ENCODE measurements at regions of chr2 and their contacts with region 1.

Region 1: GRCh38 chr2:74529357-74530238 is at the starts of genes AUP1 and HTRA2:
- DNase-seq: peak; percentile 98
- ATAC-seq: peak; percentile 90
- H3K4me3 ChIP-seq: peak within 1 kb of the TSS; percentile 84 to 100 (median 100)
- H3K27ac ChIP-seq: peak within 1 kb of the TSS; percentile 95
- H3K4me1 ChIP-seq: peaks cover 55% of the 10 kb centered on the region
- H3K27me3 ChIP-seq: no peaks in the 10 kb centered on the region; a peak in 1 of 5 replicates
- CTCF ChIP-seq: peak; percentile 33
- EP300 ChIP-seq: peak; percentile 58 to 73; a peak in 2 of 4 replicates
- POLR2A ChIP-seq: peak; percentile 82 to 89
- RAD21 ChIP-seq: peak; percentile 52
- total RNA-seq, gene AUP1: 67.0 and 174 TPM in 2 replicates
- total RNA-seq, gene HTRA2: 37.0 and 47.7 TPM in 2 replicates

Region 2: DNA sequence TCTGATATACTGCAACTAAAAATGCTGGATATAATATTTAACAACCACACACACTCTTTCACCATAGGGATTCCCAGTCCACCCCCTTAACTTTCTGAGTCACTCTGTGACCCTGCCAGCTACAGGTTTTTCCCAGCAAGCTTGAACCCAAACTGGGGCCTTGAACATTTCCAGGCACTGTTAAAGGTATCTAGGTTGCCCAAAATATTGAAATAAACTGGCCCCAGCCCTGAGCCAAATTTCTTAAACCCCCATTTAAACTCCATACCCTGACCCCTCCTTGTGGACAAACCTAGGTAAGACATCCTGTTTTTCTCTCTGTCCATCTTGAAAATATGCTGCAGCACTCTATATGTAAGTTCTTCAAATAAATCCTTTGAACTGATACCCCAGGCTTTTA is 129.8 kb before region 1 on chr2:
- CTCF ChIA-PET with region 1: no interaction called
- POLR2A ChIA-PET with region 1: no interaction called
- in situ Hi-C with region 1: no loop called
- intact Hi-C with region 1: no loop called
- DNase-seq: peak; percentile 41
- ATAC-seq: peak; percentile 70
- H3K4me3 ChIP-seq: no peak overlapping the region
- H3K27ac ChIP-seq: no peak overlapping the region
- H3K4me1 ChIP-seq: 0 out of 2 replicates have a peak, but pooled peaks cover 6% of the 10 kb centered on the region
- H3K27me3 ChIP-seq: no peaks in the 10 kb centered on the region
- CTCF ChIP-seq: peak; percentile 49
- EP300 ChIP-seq: no peak
- POLR2A ChIP-seq: no peak
- RAD21 ChIP-seq: no peak

Region 3: GRCh38 chr2:74458132-74458925 is 71.3 kb before region 1 on chr2 and contains the start of gene WBP1:
- CTCF ChIA-PET with region 1: interaction called, 5 read pairs
- POLR2A ChIA-PET with region 1: interaction called, 23 read pairs
- in situ Hi-C with region 1: no loop called
- intact Hi-C with region 1: loop called (anchors 2 kb)
- DNase-seq: peak; percentile 100
- ATAC-seq: peak; percentile 92
- H3K4me3 ChIP-seq: peak within 1 kb of the TSS; percentile 76 to 92 (median 88)
- H3K27ac ChIP-seq: peak within 1 kb of the TSS; percentile 89
- H3K4me1 ChIP-seq: peaks cover 41% of the 10 kb centered on the region
- H3K27me3 ChIP-seq: no peaks in the 10 kb centered on the region; a peak in 1 of 5 replicates
- CTCF ChIP-seq: no peak
- EP300 ChIP-seq: no peak; a peak in 1 of 4 replicates
- POLR2A ChIP-seq: peak in 1 of 2 experiments; percentile 62; a peak in 2 of 4 replicates
- RAD21 ChIP-seq: 0 out of 2 replicates have a peak, but pooled peaks have one; percentile 26
- total RNA-seq, gene WBP1: 26.5 and 38.8 TPM in 2 replicates

Region 4: GRCh38 chr2:74482801-74483674 is 46.6 kb before region 1 on chr2 and contains the starts of genes CCDC142 and TTC31:
- CTCF ChIA-PET with region 1: interaction called, 19 read pairs
- POLR2A ChIA-PET with region 1: interaction called, 93 read pairs
- in situ Hi-C with region 1: no loop called
- intact Hi-C with region 1: loop called (anchors 1 kb)
- DNase-seq: peak; percentile 97
- ATAC-seq: peak; percentile 91
- H3K4me3 ChIP-seq: peak within 1 kb of the TSS; percentile 82 to 87 (median 83)
- H3K27ac ChIP-seq: peak within 1 kb of the TSS; percentile 89
- H3K4me1 ChIP-seq: peaks cover 70% of the 10 kb centered on the region
- H3K27me3 ChIP-seq: no peaks in the 10 kb centered on the region; a peak in 1 of 5 replicates
- CTCF ChIP-seq: peak; percentile 99
- EP300 ChIP-seq: 0 out of 4 replicates have a peak, but pooled peaks of 1 of the 2 experiments have one; percentile 31
- POLR2A ChIP-seq: peak; percentile 75 to 89
- RAD21 ChIP-seq: peak; percentile 94
- total RNA-seq, gene CCDC142: 8.8 and 30.4 TPM in 2 replicates
- total RNA-seq, gene TTC31: 21.1 and 28.3 TPM in 2 replicates

Region 5: GRCh38 chr2:74507145-74507925 is 22.3 kb before region 1 on chr2 and contains the start of gene PCGF1:
- CTCF ChIA-PET with region 1: interaction called, 8 read pairs
- POLR2A ChIA-PET with region 1: interaction called, 135 read pairs
- in situ Hi-C with region 1: no loop called
- intact Hi-C with region 1: loop called (anchors 1 kb)
- DNase-seq: peak; percentile 98
- ATAC-seq: peak; percentile 78
- H3K4me3 ChIP-seq: peak within 1 kb of the TSS; percentile 79 to 97 (median 95)
- H3K27ac ChIP-seq: peak within 1 kb of the TSS; percentile 95
- H3K4me1 ChIP-seq: peaks cover 72% of the 10 kb centered on the region
- H3K27me3 ChIP-seq: no peaks in the 10 kb centered on the region; a peak in 1 of 5 replicates
- CTCF ChIP-seq: peak; percentile 98
- EP300 ChIP-seq: peak in 1 of 2 experiments; percentile 47; a peak in 1 of 4 replicates
- POLR2A ChIP-seq: peak in 1 of 2 experiments; percentile 73; a peak in 2 of 4 replicates
- RAD21 ChIP-seq: peak; percentile 89
- total RNA-seq, gene PCGF1: 14.2 and 20.4 TPM in 2 replicates

Region 6: DNA sequence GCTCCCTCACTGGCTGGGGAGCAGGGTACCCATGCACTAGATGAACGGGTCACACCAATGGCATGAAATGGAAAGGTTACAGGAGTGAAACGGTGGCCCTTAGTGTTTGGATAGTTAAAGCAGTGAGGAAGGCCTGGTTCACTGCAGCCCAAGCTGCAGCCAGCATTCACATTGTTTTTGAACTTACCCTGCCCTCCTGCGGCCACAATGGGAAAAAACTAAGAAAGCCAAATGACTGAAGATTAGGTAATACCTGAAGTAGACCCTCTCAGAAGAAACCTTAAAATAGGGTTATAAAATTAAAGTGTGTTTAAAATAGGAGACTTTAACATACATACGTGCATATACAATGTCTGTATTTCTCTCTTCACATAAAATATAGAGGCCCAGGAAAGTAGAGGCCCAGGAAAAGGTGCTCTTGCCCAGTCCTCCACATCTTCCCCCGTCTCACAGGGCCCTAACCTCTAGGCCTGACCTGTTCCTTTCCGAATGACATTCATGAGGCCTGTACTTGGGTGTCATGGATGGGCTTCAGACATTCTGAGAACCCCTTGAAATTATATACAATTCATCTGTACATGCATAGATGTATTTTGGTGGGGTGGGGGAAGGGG is 58.2 kb after region 1 on chr2:
- CTCF ChIA-PET with region 1: no interaction called
- POLR2A ChIA-PET with region 1: interaction called, 4 read pairs
- in situ Hi-C with region 1: no loop called
- intact Hi-C with region 1: loop called (anchors 1 kb)
- DNase-seq: peak; percentile 77
- ATAC-seq: peak; percentile 96
- H3K4me3 ChIP-seq: no peak overlapping the region
- H3K27ac ChIP-seq: no peak overlapping the region
- H3K4me1 ChIP-seq: peaks cover 20% of the 10 kb centered on the region
- H3K27me3 ChIP-seq: peaks cover 0 to 4% of the 10 kb centered on the region in 2 experiments; a peak in 3 of 5 replicates
- CTCF ChIP-seq: peak; percentile 94
- EP300 ChIP-seq: no peak
- POLR2A ChIP-seq: no peak
- RAD21 ChIP-seq: peak; percentile 88

Region 7: GRCh38 chr2:74715880-74716279 is 186.3 kb after region 1 on chr2:
- CTCF ChIA-PET with region 1: no interaction called
- POLR2A ChIA-PET with region 1: no interaction called
- in situ Hi-C with region 1: no loop called
- intact Hi-C with region 1: no loop called
- DNase-seq: no peak
- ATAC-seq: no peak; the same call in 2 of the 3 replicates
- H3K4me3 ChIP-seq: peak overlapping the region; percentile 48 to 75 (median 74)
- H3K27ac ChIP-seq: no peak overlapping the region
- H3K4me1 ChIP-seq: peaks cover 47% of the 10 kb centered on the region
- H3K27me3 ChIP-seq: peaks cover 1 to 37% of the 10 kb centered on the region in 2 experiments; a peak in 3 of 5 replicates
- CTCF ChIP-seq: no peak
- EP300 ChIP-seq: no peak
- POLR2A ChIP-seq: no peak
- RAD21 ChIP-seq: no peak

Measured in HepG2 (cell line).